Naive thymus-derived CD4-positive, alpha-beta T cell (primary cell): ENCODE measurements at regions of chr1 and their contacts with region 1.

Region 1: DNA sequence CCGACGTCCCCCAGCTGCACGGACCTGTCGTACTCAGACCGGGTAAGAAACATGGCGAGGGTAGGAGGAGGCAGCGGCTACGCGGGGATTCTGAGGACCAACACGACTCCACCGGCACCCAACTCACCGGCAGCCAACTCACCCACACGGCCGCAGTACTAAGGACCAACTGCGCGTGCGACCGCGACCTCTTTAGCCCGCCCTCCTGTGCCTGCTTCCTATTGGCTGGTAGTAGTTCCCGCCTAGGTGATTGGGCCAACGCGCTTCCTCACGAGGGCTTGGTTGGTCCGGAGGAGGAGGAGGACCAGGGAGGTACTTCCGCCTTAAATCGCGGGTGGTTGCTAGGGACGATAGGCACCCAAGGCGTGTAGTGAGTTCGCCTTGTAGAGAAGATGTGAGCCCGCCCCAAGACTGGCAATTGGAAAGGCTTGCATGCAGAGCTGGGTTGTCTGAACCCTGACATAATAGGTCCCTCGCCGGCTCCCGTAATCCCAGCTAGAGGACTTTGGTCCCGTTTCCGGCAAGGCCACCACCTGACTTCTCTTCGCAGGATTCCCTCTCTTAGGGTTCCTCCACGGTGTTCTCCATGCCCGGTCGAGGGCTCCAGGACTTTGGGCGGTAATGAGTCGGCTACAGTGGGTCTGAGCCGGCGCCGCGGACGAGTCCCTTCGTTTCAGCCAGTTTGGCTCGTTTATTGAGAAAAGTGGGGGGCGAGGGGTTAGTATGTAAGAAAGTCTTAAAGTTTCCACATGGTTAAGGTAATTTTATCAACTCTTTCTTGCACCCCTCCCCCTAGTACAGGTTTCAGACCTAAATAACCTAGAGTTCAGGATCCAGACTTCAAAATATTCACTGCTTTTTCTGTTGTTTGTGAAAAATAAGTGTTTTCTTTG is at the start of gene PSMA5:
- DNase-seq: peak; percentile 73 to 97 (median 95)
- ATAC-seq: peak; percentile 96
- H3K4me3 ChIP-seq: peak within 1 kb of the TSS; percentile 77
- H3K4me3 Mint-ChIP-seq: peak within 1 kb of the TSS; percentile 95 to 99 (median 98)
- H3K27ac ChIP-seq: peak within 1 kb of the TSS; percentile 91
- H3K27ac Mint-ChIP-seq: peak within 1 kb of the TSS; percentile 80 to 99 (median 98)
- H3K4me1 ChIP-seq: peaks cover 27 to 29% of the 10 kb centered on the region in 2 donors
- H3K4me1 Mint-ChIP-seq: peaks cover 29 to 46% (median 34%) of the 10 kb centered on the region in 7 donors
- H3K27me3 ChIP-seq: no peaks in the 10 kb centered on the region
- H3K27me3 Mint-ChIP-seq: no peaks in the 10 kb centered on the region
- total RNA-seq, gene PSMA5: 38.3 to 203 (median 70.7) TPM

Region 2: GRCh38 chr1:108801101-108801500 is 625.4 kb before region 1 on chr1:
- CTCF ChIA-PET with region 1: no interaction called
- POLR2A ChIA-PET with region 1: no interaction called
- intact Hi-C with region 1: no loop called
- DNase-seq: no peak
- ATAC-seq: no peak
- H3K4me3 ChIP-seq: no peak overlapping the region
- H3K4me3 Mint-ChIP-seq: no peak overlapping the region
- H3K27ac ChIP-seq: no peak overlapping the region
- H3K27ac Mint-ChIP-seq: peak overlapping the region in 2 of 9 donors; percentile 7 to 14
- H3K4me1 ChIP-seq: no peaks in the 10 kb centered on the region
- H3K4me1 Mint-ChIP-seq: peaks cover 0 to 5% (median 0%) of the 10 kb centered on the region in 7 donors
- H3K27me3 ChIP-seq: no peaks in the 10 kb centered on the region
- H3K27me3 Mint-ChIP-seq: no peaks in the 10 kb centered on the region

Region 3: GRCh38 chr1:108963052-108963686 is 463.4 kb before region 1 on chr1 and contains the start of gene CLCC1:
- CTCF ChIA-PET with region 1: no interaction called
- POLR2A ChIA-PET with region 1: no interaction called
- intact Hi-C with region 1: loop called (anchors 5 to 10 kb)
- DNase-seq: peak; percentile 78 to 92 (median 89)
- ATAC-seq: peak; percentile 97
- H3K4me3 ChIP-seq: peak within 1 kb of the TSS; percentile 76
- H3K4me3 Mint-ChIP-seq: peak within 1 kb of the TSS; percentile 87 to 94 (median 90)
- H3K27ac ChIP-seq: peak within 1 kb of the TSS; percentile 85
- H3K27ac Mint-ChIP-seq: peak within 1 kb of the TSS; percentile 78 to 97 (median 92)
- H3K4me1 ChIP-seq: peaks cover 11 to 16% of the 10 kb centered on the region in 2 donors
- H3K4me1 Mint-ChIP-seq: peaks cover 21 to 48% (median 37%) of the 10 kb centered on the region in 7 donors
- H3K27me3 ChIP-seq: no peaks in the 10 kb centered on the region
- H3K27me3 Mint-ChIP-seq: peaks cover 0 to 15% (median 0%) of the 10 kb centered on the region in 5 donors
- total RNA-seq, gene CLCC1: 15.4 to 34.6 (median 25.2) TPM

Region 4: GRCh38 chr1:109090196-109091077 is 336.1 kb before region 1 on chr1 and contains the start of gene TMEM167B:
- CTCF ChIA-PET with region 1: no interaction called
- POLR2A ChIA-PET with region 1: no interaction called
- intact Hi-C with region 1: loop called in 1 of 2 experiments (anchors 5 kb)
- DNase-seq: peak; percentile 71 to 92 (median 87)
- ATAC-seq: peak; percentile 98
- H3K4me3 ChIP-seq: peak within 1 kb of the TSS; percentile 84
- H3K4me3 Mint-ChIP-seq: peak within 1 kb of the TSS; percentile 88 to 98 (median 96)
- H3K27ac ChIP-seq: peak within 1 kb of the TSS; percentile 97
- H3K27ac Mint-ChIP-seq: peak within 1 kb of the TSS; percentile 90 to 99 (median 98)
- H3K4me1 ChIP-seq: peaks cover 14 to 18% of the 10 kb centered on the region in 2 donors
- H3K4me1 Mint-ChIP-seq: peaks cover 15 to 43% (median 36%) of the 10 kb centered on the region in 7 donors
- H3K27me3 ChIP-seq: no peaks in the 10 kb centered on the region
- H3K27me3 Mint-ChIP-seq: no peaks in the 10 kb centered on the region
- total RNA-seq, gene TMEM167B: 33.2 to 65.6 (median 41.2) TPM

Region 5: DNA sequence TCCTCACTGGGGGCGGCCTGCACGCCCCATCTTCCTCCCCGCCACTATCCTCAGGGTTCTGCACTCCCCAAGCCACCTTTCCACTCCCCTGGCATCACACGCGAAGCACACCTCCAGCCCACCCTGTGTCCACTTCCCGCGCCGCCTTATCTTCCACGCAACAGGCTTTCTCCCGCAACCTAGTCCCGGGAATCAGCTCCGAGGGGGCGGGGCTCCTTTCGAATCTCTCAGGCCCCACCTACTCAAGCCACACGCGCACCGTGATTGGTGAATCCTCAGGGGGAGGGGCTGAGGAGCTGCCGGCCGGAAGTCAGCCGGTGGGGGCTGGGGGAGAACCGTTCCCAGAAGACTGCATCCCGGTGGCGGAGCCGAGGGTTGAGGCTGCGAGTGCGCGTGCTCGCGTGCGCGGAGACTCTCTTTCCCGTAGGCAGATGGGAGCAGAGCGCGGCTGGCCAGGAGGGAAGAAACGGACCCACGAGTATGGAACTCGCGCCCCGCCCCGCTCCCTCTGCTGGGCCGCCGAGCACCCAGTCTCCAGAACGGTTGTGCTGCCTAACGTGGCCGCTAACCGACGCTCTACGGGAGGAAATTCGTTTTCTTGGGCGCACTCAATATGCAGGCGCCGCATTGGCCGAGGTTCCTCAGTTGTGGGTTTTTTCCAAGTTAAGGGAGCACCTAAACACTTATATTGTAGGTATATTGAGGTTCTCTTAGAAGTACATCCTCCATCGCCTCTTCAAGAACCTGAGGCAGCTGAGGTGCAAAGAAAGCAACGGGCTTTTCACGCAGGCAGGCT is 143.4 kb before region 1 on chr1 and contains the start of gene PSRC1:
- CTCF ChIA-PET with region 1: no interaction called
- POLR2A ChIA-PET with region 1: interaction called, 4 read pairs
- intact Hi-C with region 1: loop called (anchors 1 kb)
- DNase-seq: peak; percentile 78 to 94 (median 88)
- ATAC-seq: peak; percentile 98
- H3K4me3 ChIP-seq: peak within 1 kb of the TSS; percentile 92
- H3K4me3 Mint-ChIP-seq: peak within 1 kb of the TSS; percentile 89 to 99 (median 96)
- H3K27ac ChIP-seq: peak within 1 kb of the TSS; percentile 65
- H3K27ac Mint-ChIP-seq: peak within 1 kb of the TSS; percentile 55 to 94 (median 88)
- H3K4me1 ChIP-seq: peaks cover 8 to 11% of the 10 kb centered on the region in 2 donors
- H3K4me1 Mint-ChIP-seq: peaks cover 6 to 29% (median 14%) of the 10 kb centered on the region in 7 donors
- H3K27me3 ChIP-seq: no peaks in the 10 kb centered on the region
- H3K27me3 Mint-ChIP-seq: peaks cover 0 to 8% (median 0%) of the 10 kb centered on the region in 5 donors
- total RNA-seq, gene PSRC1: 0.38 to 16.1 (median 1.3) TPM in 4 of 5 experiments, not detected in the other

Region 6: DNA sequence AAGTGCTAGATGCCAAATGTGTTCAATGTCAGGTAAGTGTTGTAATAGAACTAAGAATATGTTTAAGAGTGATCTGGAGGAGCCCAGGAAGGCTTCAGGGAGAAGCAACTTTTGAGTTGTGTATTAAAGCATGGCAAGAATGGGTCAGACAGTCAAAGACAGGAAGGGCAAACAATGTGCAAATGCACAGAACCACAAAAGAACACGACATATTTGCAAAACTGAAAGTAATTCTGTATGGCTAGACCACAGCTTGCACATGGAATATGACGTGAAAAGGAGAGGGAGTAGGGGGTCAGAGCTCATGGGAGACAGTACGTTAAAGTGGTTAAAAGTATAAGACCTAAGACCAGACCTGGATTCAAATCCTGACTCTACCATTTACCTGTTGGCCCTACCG is 21.7 kb before region 1 on chr1:
- CTCF ChIA-PET with region 1: interaction called, 3 read pairs
- POLR2A ChIA-PET with region 1: no interaction called
- intact Hi-C with region 1: loop called in 1 of 2 experiments (anchors 2 kb)
- DNase-seq: no peak
- ATAC-seq: no peak
- H3K4me3 ChIP-seq: no peak overlapping the region
- H3K4me3 Mint-ChIP-seq: peak overlapping the region in 1 of 10 donors; percentile 13
- H3K27ac ChIP-seq: no peak overlapping the region
- H3K27ac Mint-ChIP-seq: peak overlapping the region; percentile 9 to 85 (median 68)
- H3K4me1 ChIP-seq: peaks cover 0 to 9% of the 10 kb centered on the region in 2 donors
- H3K4me1 Mint-ChIP-seq: peaks cover 20 to 34% (median 25%) of the 10 kb centered on the region in 7 donors
- H3K27me3 ChIP-seq: no peaks in the 10 kb centered on the region
- H3K27me3 Mint-ChIP-seq: no peaks in the 10 kb centered on the region

Region 7: DNA sequence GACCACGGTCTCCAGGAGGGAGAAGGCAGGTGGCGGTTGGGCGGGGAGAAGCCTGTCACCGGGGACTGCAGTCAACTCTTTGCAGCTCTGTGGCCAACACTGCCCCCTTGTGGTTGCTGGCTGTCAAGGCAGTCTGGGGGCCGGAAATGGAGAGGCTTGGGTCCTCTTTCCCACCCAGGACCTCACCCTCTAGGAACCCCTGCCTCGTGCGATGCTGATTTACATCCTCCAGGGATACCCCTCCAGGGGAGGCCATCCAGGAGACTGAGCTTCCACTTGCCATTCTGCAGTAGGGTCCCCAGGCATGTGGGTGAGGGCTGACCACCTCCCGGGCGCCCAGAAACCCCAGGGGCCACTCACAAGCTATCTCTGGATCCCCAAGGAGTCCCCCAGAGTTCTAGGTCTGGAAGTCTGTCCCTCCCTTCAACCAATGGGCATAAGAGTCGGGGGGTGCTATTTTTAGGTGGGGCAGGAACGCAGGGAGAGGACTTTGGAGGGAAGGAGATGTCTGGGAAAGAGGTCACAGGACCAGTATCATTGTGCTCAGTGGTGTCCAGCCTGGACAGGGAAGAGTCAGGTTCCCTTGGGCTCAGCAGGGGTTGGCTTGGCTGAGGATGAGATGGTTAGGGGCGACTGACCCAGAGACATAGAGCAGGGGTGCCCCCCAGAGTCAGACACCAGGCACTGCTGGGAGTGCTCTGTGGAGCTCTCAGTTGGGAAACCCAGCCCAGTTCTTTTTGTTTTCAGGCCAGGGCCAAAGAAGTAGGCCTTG is 106.0 kb after region 1 on chr1:
- CTCF ChIA-PET with region 1: interaction called, 5 read pairs
- POLR2A ChIA-PET with region 1: no interaction called
- intact Hi-C with region 1: loop called (anchors 1 kb)
- DNase-seq: peak; percentile 79 to 96 (median 87)
- ATAC-seq: peak; percentile 94
- H3K4me3 ChIP-seq: peak overlapping the region; percentile 57
- H3K4me3 Mint-ChIP-seq: peak overlapping the region; percentile 78 to 91 (median 86)
- H3K27ac ChIP-seq: no peak overlapping the region
- H3K27ac Mint-ChIP-seq: peak overlapping the region; percentile 66 to 95 (median 86)
- H3K4me1 ChIP-seq: peaks cover 11 to 28% of the 10 kb centered on the region in 2 donors
- H3K4me1 Mint-ChIP-seq: peaks cover 22 to 40% (median 30%) of the 10 kb centered on the region in 7 donors
- H3K27me3 ChIP-seq: no peaks in the 10 kb centered on the region
- H3K27me3 Mint-ChIP-seq: no peaks in the 10 kb centered on the region

Region 8: DNA sequence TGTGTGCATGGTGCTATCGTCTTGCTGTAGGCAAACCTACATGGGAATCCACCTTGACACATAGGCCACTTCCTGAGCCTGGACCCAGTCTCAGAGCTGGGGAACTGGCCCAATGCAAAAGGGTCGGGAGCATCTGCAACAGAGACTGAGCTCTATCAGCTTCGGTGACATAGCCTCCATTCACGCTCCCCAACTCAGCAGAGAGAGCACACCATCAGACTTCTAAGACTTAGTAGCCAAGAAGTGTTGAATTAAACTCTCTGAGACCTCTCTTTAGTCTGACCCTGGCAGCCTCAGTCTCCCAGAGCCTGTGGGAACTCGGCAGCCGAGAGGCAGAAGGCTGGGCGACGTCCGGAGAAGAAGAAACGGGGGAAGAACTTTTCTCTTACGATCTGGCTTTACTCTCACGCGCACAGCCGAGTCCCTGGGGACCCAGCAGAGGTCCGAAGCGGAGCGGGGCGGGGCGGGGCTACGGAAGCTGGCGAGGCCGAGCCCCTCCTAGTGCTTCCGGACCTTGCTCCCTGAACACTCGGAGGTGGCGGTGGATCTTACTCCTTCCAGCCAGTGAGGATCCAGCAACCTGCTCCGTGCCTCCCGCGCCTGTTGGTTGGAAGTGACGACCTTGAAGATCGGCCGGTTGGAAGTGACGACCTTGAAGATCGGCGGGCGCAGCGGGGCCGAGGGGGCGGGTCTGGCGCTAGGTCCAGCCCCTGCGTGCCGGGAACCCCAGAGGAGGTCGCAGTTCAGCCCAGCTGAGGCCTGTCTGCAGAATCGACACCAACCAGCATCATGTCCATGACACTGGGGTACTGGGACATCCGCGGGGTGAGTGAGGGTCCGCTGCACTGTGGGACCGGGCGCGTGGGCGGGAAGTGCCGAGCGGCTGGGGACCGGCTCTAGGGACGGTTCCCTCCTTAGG is 229.3 kb after region 1 on chr1 and contains the start of gene GSTM4:
- CTCF ChIA-PET with region 1: no interaction called
- POLR2A ChIA-PET with region 1: no interaction called
- intact Hi-C with region 1: no loop called
- DNase-seq: peak in 8 of 9 donors; percentile 18 to 76 (median 38)
- ATAC-seq: peak; percentile 88
- H3K4me3 ChIP-seq: peak within 1 kb of the TSS; percentile 89
- H3K4me3 Mint-ChIP-seq: peak within 1 kb of the TSS; percentile 87 to 96 (median 94)
- H3K27ac ChIP-seq: peak within 1 kb of the TSS; percentile 67
- H3K27ac Mint-ChIP-seq: peak within 1 kb of the TSS; percentile 76 to 94 (median 87)
- H3K4me1 ChIP-seq: peaks cover 6 to 9% of the 10 kb centered on the region in 2 donors
- H3K4me1 Mint-ChIP-seq: peaks cover 10 to 36% (median 24%) of the 10 kb centered on the region in 7 donors
- H3K27me3 ChIP-seq: no peaks in the 10 kb centered on the region
- H3K27me3 Mint-ChIP-seq: peaks cover 0 to 28% (median 0%) of the 10 kb centered on the region in 5 donors
- total RNA-seq, gene GSTM4: 14.2 to 28.4 (median 16.1) TPM

Region 9: GRCh38 chr1:109984456-109985275 is 558.1 kb after region 1 on chr1 and contains the start of gene AHCYL1:
- CTCF ChIA-PET with region 1: no interaction called
- POLR2A ChIA-PET with region 1: no interaction called
- intact Hi-C with region 1: loop called in 1 of 2 experiments (anchors 1 kb)
- DNase-seq: peak; percentile 97 to 99 (median 99)
- ATAC-seq: peak; percentile 99
- H3K4me3 ChIP-seq: peak within 1 kb of the TSS; percentile 72
- H3K4me3 Mint-ChIP-seq: peak within 1 kb of the TSS; percentile 87 to 100 (median 97)
- H3K27ac ChIP-seq: peak within 1 kb of the TSS; percentile 92
- H3K27ac Mint-ChIP-seq: peak within 1 kb of the TSS; percentile 94 to 99 (median 98)
- H3K4me1 ChIP-seq: peaks cover 22 to 24% of the 10 kb centered on the region in 2 donors
- H3K4me1 Mint-ChIP-seq: peaks cover 22 to 49% (median 42%) of the 10 kb centered on the region in 7 donors
- H3K27me3 ChIP-seq: no peaks in the 10 kb centered on the region
- H3K27me3 Mint-ChIP-seq: peaks cover 0 to 6% (median 0%) of the 10 kb centered on the region in 5 donors
- total RNA-seq, gene AHCYL1: 16.6 to 60.1 (median 37.1) TPM